CD4-positive, alpha-beta memory T cell (primary cell): ENCODE measurements at regions of chr6 and their contacts with region 1.

Region 1: DNA sequence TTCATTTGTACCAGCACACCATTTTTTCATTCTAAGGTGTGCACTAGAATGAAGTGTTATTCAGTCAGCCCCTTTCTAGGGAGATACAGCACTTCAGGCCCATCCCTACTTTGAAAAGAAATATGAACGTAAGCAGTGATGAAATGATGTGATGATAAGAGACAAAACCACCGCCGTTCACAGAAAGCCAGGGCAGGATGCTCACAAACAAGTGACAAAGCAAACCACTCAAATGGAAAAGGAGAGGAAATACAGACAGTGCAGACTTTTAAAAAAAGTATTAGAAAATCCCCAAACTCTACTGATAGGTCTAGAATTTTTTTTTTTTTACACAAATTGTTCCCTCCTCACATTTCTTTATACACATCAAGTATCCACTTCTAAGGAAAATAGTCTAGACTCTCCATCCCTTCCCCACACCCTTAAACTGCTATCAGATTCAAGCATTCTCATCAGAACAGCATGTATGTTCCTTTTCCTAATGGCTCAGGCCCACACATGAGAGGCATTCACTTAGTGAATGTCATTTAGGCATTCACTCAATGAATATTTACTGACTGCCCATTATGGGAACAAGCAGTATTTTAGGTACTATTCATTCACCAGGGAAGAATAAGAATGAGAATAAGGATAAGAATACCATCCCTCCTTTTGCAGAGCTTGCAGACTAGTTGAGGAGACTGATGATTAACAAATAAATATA is 243.5 kb downstream of the GMPR start:
- DNase-seq: peak; percentile 84 to 92 (median 88)
- H3K4me3 ChIP-seq: no peak overlapping the region
- H3K4me3 Mint-ChIP-seq: peak overlapping the region; percentile 3 to 76 (median 52)
- H3K27ac ChIP-seq: peak overlapping the region; percentile 75
- H3K27ac Mint-ChIP-seq: peak overlapping the region; percentile 88 to 99 (median 95)
- H3K4me1 ChIP-seq: peaks cover 81% of the 10 kb centered on the region
- H3K4me1 Mint-ChIP-seq: peaks cover 66 to 88% (median 77%) of the 10 kb centered on the region in 4 donors
- H3K27me3 ChIP-seq: no peaks in the 10 kb centered on the region
- H3K27me3 Mint-ChIP-seq: no peaks in the 10 kb centered on the region

Region 2: GRCh38 chr6:15987569-15987968 is 494.3 kb before region 1 on chr6:
- CTCF ChIA-PET with region 1: no interaction called
- POLR2A ChIA-PET with region 1: no interaction called
- intact Hi-C with region 1: no loop called
- DNase-seq: no peak
- H3K4me3 ChIP-seq: no peak overlapping the region
- H3K4me3 Mint-ChIP-seq: no peak overlapping the region
- H3K27ac ChIP-seq: no peak overlapping the region
- H3K27ac Mint-ChIP-seq: no peak overlapping the region
- H3K4me1 ChIP-seq: no peaks in the 10 kb centered on the region
- H3K4me1 Mint-ChIP-seq: no peaks in the 10 kb centered on the region
- H3K27me3 ChIP-seq: no peaks in the 10 kb centered on the region
- H3K27me3 Mint-ChIP-seq: peaks cover 3 to 6% of the 10 kb centered on the region in 2 donors

Region 3: DNA sequence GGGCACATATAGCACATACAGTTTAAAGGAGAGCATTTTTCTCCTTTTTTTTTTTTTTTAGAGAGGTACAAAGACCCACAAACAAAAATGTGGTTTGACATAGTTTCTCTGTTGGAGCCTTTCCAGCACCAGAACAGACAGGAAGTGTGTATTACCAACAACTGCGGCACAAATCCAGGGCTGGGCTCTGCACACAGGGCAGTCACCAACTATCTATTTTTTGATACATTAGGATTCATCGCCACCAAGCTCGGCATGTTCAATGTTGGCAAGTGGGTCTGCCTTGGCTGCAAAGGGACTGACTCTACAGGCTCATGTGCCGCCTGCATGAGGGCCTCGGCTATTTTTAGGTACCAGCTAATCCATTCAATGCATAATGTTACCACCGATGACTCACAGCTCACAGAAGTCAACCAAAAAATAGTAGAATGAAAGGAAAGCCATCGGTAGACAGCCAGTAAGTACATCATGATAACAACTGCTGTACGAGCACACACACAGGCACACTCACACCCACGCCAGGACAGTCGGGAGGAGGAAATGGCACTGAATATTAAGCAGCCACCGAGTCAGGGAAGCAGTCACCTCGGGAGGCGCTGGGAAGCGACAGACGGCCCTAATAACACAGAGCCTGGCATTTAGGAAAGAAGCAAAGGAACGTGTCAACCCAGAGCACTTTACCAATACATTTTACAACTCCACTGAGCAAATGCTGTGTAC is 161.9 kb before region 1 on chr6:
- CTCF ChIA-PET with region 1: no interaction called
- POLR2A ChIA-PET with region 1: no interaction called
- intact Hi-C with region 1: loop called (anchors 5 kb)
- DNase-seq: peak; percentile 80 to 94 (median 86)
- H3K4me3 ChIP-seq: peak overlapping the region; percentile 19 to 41
- H3K4me3 Mint-ChIP-seq: peak overlapping the region; percentile 76 to 89 (median 83)
- H3K27ac ChIP-seq: peak overlapping the region; percentile 82
- H3K27ac Mint-ChIP-seq: peak overlapping the region; percentile 93 to 98 (median 97)
- H3K4me1 ChIP-seq: peaks cover 84% of the 10 kb centered on the region
- H3K4me1 Mint-ChIP-seq: peaks cover 47 to 84% (median 71%) of the 10 kb centered on the region in 4 donors
- H3K27me3 ChIP-seq: no peaks in the 10 kb centered on the region
- H3K27me3 Mint-ChIP-seq: no peaks in the 10 kb centered on the region

Region 4: DNA sequence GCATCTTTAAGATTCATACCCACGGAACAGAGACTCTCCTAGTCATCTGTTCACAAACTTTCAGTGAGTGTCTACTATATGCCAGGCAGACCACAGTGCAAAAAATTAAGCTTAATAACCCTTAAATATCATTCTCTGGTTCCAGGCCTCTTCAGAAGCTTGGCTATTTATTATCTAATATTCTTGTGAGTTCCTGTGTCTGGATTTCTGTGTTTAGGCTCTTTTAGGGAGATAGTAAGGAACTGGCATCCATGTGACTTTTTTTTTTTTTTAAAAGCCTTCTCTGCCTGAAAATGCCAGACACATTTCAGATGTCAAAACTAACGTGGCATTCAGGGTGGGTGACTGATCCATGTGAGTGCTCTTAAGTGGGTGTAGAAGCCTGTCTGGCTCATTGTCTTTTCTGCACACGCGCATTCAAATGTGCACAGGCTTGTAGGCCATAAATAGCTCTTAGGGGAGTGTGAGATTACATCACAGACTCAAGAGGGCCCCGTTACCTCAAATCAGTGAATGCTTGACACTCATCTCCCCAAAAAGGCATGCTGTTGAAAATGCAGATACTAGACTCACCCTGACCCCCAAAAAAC is 101.5 kb before region 1 on chr6:
- CTCF ChIA-PET with region 1: no interaction called
- POLR2A ChIA-PET with region 1: no interaction called
- intact Hi-C with region 1: no loop called
- DNase-seq: no peak
- H3K4me3 ChIP-seq: no peak overlapping the region
- H3K4me3 Mint-ChIP-seq: no peak overlapping the region
- H3K27ac ChIP-seq: no peak overlapping the region
- H3K27ac Mint-ChIP-seq: peak overlapping the region in 1 of 7 donors; percentile 25
- H3K4me1 ChIP-seq: no peaks in the 10 kb centered on the region
- H3K4me1 Mint-ChIP-seq: peaks cover 11 to 21% (median 14%) of the 10 kb centered on the region in 4 donors
- H3K27me3 ChIP-seq: no peaks in the 10 kb centered on the region
- H3K27me3 Mint-ChIP-seq: no peaks in the 10 kb centered on the region

Region 5: GRCh38 chr6:16420715-16421461 is 61.0 kb before region 1 on chr6:
- CTCF ChIA-PET with region 1: no interaction called
- POLR2A ChIA-PET with region 1: interaction called, 4 read pairs
- intact Hi-C with region 1: loop called (anchors 2 kb)
- DNase-seq: peak; percentile 75 to 86 (median 76)
- H3K4me3 ChIP-seq: peak overlapping the region; percentile 24 to 32
- H3K4me3 Mint-ChIP-seq: peak overlapping the region; percentile 73 to 92 (median 84)
- H3K27ac ChIP-seq: peak overlapping the region; percentile 69
- H3K27ac Mint-ChIP-seq: peak overlapping the region; percentile 92 to 99 (median 99)
- H3K4me1 ChIP-seq: peaks cover 53% of the 10 kb centered on the region
- H3K4me1 Mint-ChIP-seq: peaks cover 55 to 72% (median 60%) of the 10 kb centered on the region in 4 donors
- H3K27me3 ChIP-seq: no peaks in the 10 kb centered on the region
- H3K27me3 Mint-ChIP-seq: no peaks in the 10 kb centered on the region

Region 6: DNA sequence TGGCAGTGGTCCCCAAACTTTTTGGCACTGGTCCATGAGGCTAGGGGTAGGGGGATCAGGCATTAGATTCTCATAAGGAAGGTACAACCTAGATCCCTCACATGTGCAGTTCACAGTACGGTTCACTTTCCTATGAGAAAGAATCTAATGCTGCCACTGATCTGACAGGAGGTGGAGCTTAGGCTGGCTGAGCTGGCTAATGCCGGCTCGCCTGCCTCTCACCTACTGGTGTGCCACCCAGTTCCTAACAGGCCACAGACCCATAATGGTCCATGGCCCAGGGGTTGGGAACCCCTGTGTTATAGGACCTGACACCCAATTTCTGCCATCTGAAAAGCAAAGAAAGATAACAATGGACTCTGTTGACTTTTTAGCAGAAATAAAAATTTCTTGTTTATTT is 43.9 kb before region 1 on chr6:
- CTCF ChIA-PET with region 1: interaction called, 3 read pairs
- POLR2A ChIA-PET with region 1: interaction called, 14 read pairs
- intact Hi-C with region 1: loop called (anchors 2 kb)
- DNase-seq: peak in 2 of 5 donors; percentile 33 to 53
- H3K4me3 ChIP-seq: peak overlapping the region in 1 of 2 donors; percentile 40
- H3K4me3 Mint-ChIP-seq: peak overlapping the region; percentile 38 to 89 (median 78)
- H3K27ac ChIP-seq: peak overlapping the region; percentile 55
- H3K27ac Mint-ChIP-seq: peak overlapping the region; percentile 91 to 99 (median 98)
- H3K4me1 ChIP-seq: peaks cover 82% of the 10 kb centered on the region
- H3K4me1 Mint-ChIP-seq: peaks cover 64 to 89% (median 76%) of the 10 kb centered on the region in 4 donors
- H3K27me3 ChIP-seq: no peaks in the 10 kb centered on the region
- H3K27me3 Mint-ChIP-seq: no peaks in the 10 kb centered on the region

Region 7: GRCh38 chr6:16471222-16471909 is 10.5 kb before region 1 on chr6:
- CTCF ChIA-PET with region 1: interaction called, 8 read pairs
- POLR2A ChIA-PET with region 1: interaction called, 13 read pairs
- intact Hi-C with region 1: no loop called
- DNase-seq: no peak
- H3K4me3 ChIP-seq: no peak overlapping the region
- H3K4me3 Mint-ChIP-seq: peak overlapping the region in 4 of 8 donors; percentile 45 to 75 (median 54)
- H3K27ac ChIP-seq: no peak overlapping the region
- H3K27ac Mint-ChIP-seq: peak overlapping the region; percentile 72 to 95 (median 83)
- H3K4me1 ChIP-seq: peaks cover 70% of the 10 kb centered on the region
- H3K4me1 Mint-ChIP-seq: peaks cover 55 to 80% (median 64%) of the 10 kb centered on the region in 4 donors
- H3K27me3 ChIP-seq: no peaks in the 10 kb centered on the region
- H3K27me3 Mint-ChIP-seq: peaks cover 0 to 3% of the 10 kb centered on the region in 2 donors

Region 8: GRCh38 chr6:16770701-16771569 is 289.1 kb after region 1 on chr6:
- CTCF ChIA-PET with region 1: no interaction called
- POLR2A ChIA-PET with region 1: no interaction called
- intact Hi-C with region 1: no loop called
- DNase-seq: peak; percentile 75 to 79 (median 77)
- H3K4me3 ChIP-seq: no peak overlapping the region
- H3K4me3 Mint-ChIP-seq: peak overlapping the region in 6 of 8 donors; percentile 30 to 71 (median 46)
- H3K27ac ChIP-seq: no peak overlapping the region
- H3K27ac Mint-ChIP-seq: peak overlapping the region; percentile 80 to 95 (median 91)
- H3K4me1 ChIP-seq: peaks cover 36% of the 10 kb centered on the region
- H3K4me1 Mint-ChIP-seq: peaks cover 30 to 56% (median 41%) of the 10 kb centered on the region in 4 donors
- H3K27me3 ChIP-seq: no peaks in the 10 kb centered on the region
- H3K27me3 Mint-ChIP-seq: no peaks in the 10 kb centered on the region